ENCODE measurements at regions of chr1 and their contacts with region 1.

Region 1: DNA sequence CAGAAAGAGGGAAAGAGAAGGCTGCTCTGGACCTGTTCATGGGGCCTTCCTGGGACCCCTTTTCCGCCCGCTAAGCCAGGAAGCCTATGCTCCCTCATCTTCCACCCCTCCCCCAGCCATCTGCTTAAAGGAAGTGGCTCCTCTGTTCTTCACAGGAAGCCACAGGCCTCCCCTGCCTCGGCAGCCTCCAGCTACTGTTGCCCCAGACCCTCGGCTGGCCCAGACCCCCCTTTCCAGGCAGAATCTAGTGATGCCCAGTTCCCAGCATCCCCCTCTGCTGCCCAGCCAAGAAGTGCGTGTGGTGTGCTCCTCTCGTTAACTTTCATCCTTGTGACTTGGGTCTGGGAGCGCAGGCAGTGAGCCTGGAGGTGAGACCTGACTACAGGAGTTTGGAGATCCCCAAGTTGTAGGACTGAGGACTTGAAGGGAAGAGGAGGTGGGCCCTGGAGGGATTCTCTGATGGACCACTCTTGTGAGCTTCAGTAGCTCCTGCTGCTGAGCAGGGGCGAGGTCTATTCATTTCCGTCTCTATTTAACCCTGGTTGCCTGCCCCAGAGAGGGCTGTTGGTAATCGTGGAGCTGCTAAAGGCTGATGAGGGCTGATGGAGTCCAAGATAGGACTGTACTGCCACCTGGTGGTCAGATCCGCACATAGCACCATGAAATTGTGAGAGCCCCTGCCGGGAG is 9.1 kb downstream of the IFI6 start:
- DNase-seq: peak; percentile 85 to 89 (median 87)
- H3K4me3 ChIP-seq: peak overlapping the region; percentile 18 to 49
- H3K4me3 Mint-ChIP-seq: peak overlapping the region; percentile 69 to 93 (median 84)
- H3K27ac ChIP-seq: peak overlapping the region; percentile 76
- H3K27ac Mint-ChIP-seq: peak overlapping the region; percentile 95 to 100 (median 98)
- H3K4me1 ChIP-seq: peaks cover 50% of the 10 kb centered on the region
- H3K4me1 Mint-ChIP-seq: peaks cover 41 to 50% (median 46%) of the 10 kb centered on the region in 4 donors
- H3K27me3 ChIP-seq: no peaks in the 10 kb centered on the region
- H3K27me3 Mint-ChIP-seq: no peaks in the 10 kb centered on the region

Region 2: DNA sequence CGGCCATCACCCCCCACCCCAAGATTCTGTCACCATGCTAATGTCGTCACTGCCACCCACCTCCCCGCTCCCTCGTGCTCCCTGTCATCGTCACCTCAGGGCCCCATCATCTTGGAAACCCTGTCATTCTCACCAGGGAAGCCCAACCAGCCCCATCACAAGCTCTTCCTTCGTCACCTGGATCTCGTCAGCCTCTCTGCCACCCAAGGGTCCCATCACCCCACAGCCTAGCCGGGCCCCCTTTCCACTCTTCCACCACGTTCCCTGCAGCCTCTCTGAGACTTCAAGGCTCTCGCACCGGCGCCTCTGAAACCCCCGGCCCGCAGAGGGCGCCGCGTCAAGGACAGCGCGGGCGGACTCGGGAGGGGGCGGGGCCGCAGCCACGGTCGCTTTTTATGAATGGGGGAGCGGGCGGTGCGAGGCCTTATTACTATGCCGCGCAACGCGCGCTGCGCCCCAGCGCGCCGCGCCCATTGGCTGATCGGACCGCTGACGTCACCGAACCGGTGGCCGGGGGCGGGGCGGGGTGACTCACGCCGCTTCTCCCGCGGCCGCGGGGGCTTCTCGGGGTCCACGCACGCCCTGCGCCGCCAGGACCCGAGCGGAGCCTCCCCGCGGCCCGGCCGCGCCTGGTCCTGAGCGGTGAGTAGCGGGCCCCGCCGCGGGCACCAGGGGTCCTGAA is 270.6 kb before region 1 on chr1 and contains the start of gene GPR3:
- CTCF ChIA-PET with region 1: interaction called, 8 read pairs
- POLR2A ChIA-PET with region 1: interaction called, 6 read pairs
- intact Hi-C with region 1: loop called (anchors 1 kb)
- DNase-seq: peak; percentile 88 to 92 (median 89)
- H3K4me3 ChIP-seq: peak within 1 kb of the TSS; percentile 17 to 68
- H3K4me3 Mint-ChIP-seq: peak within 1 kb of the TSS; percentile 79 to 93 (median 84)
- H3K27ac ChIP-seq: peak within 1 kb of the TSS; percentile 42
- H3K27ac Mint-ChIP-seq: peak within 1 kb of the TSS; percentile 58 to 97 (median 94)
- H3K4me1 ChIP-seq: peaks cover 26% of the 10 kb centered on the region
- H3K4me1 Mint-ChIP-seq: peaks cover 11 to 30% (median 17%) of the 10 kb centered on the region in 4 donors
- H3K27me3 ChIP-seq: no peaks in the 10 kb centered on the region
- H3K27me3 Mint-ChIP-seq: peaks cover 1 to 4% of the 10 kb centered on the region in 2 donors
- total RNA-seq, gene GPR3: not detected

Region 3: GRCh38 chr1:27489910-27490741 is 172.7 kb before region 1 on chr1 and contains the start of gene WASF2:
- CTCF ChIA-PET with region 1: no interaction called
- POLR2A ChIA-PET with region 1: interaction called, 7 read pairs
- intact Hi-C with region 1: loop called (anchors 1 kb)
- DNase-seq: peak; percentile 97 to 98 (median 97)
- H3K4me3 ChIP-seq: peak within 1 kb of the TSS; percentile 44 to 100
- H3K4me3 Mint-ChIP-seq: peak within 1 kb of the TSS; percentile 95 to 100 (median 97)
- H3K27ac ChIP-seq: peak within 1 kb of the TSS; percentile 87
- H3K27ac Mint-ChIP-seq: peak within 1 kb of the TSS; percentile 97 to 99 (median 99)
- H3K4me1 ChIP-seq: peaks cover 32% of the 10 kb centered on the region
- H3K4me1 Mint-ChIP-seq: peaks cover 18 to 45% (median 26%) of the 10 kb centered on the region in 4 donors
- H3K27me3 ChIP-seq: no peaks in the 10 kb centered on the region
- H3K27me3 Mint-ChIP-seq: peaks cover 0 to 3% of the 10 kb centered on the region in 2 donors
- total RNA-seq, gene WASF2: 163 to 164 TPM

Region 4: DNA sequence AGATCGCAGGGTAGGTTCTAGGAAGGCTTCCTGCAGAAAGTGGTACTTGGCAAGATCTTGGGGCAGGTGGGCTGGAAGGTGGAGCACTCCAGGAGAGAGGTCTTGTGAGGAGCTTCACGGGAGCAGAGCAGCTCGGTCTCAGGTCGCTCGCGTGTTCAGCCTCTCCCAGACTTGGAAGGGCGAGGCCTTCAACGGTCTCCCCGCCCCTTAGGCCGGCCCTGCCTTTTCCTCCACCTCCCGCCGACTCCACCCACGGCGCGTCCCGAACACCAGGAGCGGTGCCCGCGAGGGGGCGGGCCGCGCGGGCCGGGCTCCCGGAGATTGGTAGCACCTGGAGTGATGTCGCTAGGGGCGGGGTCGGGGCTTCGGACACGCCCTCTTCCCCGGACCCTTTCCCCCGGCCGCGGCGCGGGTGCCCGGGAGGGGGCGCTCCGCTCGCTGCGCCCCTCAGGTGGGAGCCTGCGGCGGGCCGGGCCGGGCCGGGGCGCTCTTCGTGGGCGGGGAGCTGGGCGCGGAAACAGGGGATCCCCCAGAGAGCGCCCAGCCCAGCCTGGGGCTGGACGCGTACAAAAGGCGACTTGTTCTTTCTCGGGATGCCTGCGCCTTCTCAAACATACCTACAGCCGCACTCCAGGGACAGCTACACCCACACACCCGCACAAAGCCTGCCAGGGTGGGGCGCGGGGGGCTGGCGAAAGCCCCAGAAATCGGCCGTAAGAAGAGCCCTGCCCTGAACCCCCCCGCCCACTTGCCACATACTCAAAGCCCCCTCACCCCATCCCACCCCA is 94.4 kb before region 1 on chr1:
- CTCF ChIA-PET with region 1: interaction called, 8 read pairs
- POLR2A ChIA-PET with region 1: interaction called, 9 read pairs
- intact Hi-C with region 1: loop called (anchors 1 kb)
- DNase-seq: peak; percentile 92 to 94 (median 93)
- H3K4me3 ChIP-seq: peak overlapping the region in 1 of 2 donors; percentile 55
- H3K4me3 Mint-ChIP-seq: peak overlapping the region; percentile 66 to 92 (median 84)
- H3K27ac ChIP-seq: peak overlapping the region; percentile 60
- H3K27ac Mint-ChIP-seq: peak overlapping the region; percentile 71 to 92 (median 86)
- H3K4me1 ChIP-seq: peaks cover 27% of the 10 kb centered on the region
- H3K4me1 Mint-ChIP-seq: peaks cover 16 to 39% (median 22%) of the 10 kb centered on the region in 4 donors
- H3K27me3 ChIP-seq: no peaks in the 10 kb centered on the region
- H3K27me3 Mint-ChIP-seq: no peaks in the 10 kb centered on the region

Region 5: DNA sequence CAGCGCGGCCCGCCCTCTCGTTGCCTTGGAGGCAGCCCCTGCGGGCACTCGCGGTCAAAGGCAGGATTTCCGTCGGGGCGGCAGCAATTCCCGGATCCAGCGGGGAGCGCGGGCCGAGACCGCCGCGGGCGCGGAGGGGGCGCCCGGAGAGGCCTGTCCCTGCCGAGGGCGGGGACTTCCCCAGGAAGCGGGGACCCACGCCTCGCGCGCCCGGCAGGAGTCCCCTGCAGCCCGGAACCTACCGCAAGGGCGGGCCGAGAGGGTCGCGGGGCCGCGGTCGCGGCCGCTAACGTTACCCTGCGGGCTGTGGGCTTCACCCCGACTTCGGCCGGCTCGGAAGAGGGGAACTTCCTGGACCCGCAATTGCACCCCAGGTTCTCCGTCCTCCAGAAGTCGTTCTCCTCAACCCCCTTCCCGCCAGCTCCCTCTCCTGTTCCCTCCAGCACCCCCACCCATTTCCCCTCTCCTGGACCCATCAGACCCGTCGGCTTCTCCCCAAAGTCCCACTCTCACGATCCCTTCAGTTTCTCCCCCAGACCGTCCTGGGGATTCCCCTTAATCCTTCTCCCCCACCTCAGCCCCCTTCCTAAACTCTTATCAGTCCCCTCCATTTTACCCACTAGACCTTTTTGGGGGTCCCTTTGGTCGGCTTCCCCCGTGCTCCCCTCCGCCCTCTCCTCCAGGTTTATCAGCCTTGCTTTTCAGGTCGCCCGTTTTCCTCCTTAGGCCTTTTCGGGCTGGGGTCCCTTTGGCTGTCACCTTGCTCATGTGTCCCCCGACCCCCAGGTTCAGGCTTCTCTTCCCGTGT is 28.5 kb before region 1 on chr1:
- CTCF ChIA-PET with region 1: interaction called, 7 read pairs
- POLR2A ChIA-PET with region 1: interaction called, 13 read pairs
- intact Hi-C with region 1: no loop called
- DNase-seq: peak; percentile 41 to 62 (median 46)
- H3K4me3 ChIP-seq: peak overlapping the region; percentile 17 to 38
- H3K4me3 Mint-ChIP-seq: peak overlapping the region; percentile 62 to 80 (median 72)
- H3K27ac ChIP-seq: peak overlapping the region; percentile 62
- H3K27ac Mint-ChIP-seq: peak overlapping the region; percentile 41 to 90 (median 87)
- H3K4me1 ChIP-seq: peaks cover 66% of the 10 kb centered on the region
- H3K4me1 Mint-ChIP-seq: peaks cover 51 to 82% (median 62%) of the 10 kb centered on the region in 4 donors
- H3K27me3 ChIP-seq: no peaks in the 10 kb centered on the region
- H3K27me3 Mint-ChIP-seq: no peaks in the 10 kb centered on the region

Region 6: DNA sequence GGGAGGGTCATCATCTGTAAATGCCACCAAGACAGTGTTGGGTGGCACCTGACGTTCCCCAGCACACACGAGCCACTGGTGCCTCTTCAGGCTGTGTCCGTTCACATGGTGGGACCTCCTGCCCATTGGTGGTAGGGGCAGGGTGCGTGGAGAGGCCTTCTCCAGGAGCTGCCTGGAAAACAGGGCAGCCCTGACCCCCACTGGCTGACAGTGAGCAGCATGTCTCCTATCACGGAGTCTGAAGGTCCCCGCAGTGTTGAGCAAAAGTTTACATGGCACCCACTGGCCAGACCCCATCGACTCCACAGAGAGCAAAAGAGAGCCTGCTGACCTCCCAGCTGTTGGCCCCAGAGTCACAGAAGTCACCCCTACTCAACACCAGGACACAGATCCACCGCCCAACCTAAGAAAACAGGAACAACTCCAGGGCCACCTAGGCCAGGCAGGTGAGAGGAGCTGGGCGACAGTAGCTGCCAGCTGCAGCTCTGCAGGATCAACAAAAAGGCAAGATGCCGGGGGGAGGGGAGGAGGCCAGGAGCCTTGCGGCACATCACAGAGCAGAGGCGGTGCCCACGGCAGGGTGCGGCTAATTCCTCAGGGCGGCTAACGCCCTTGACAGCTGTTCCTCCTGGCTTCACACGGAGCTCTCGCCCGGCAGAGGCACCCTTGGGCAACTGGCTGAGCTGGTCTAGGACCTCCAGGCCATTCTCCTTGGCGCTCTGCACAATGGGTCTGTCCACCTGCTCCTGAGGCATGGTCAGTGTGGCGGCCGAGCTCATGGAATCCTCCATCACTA is 23.6 kb after region 1 on chr1:
- CTCF ChIA-PET with region 1: no interaction called
- POLR2A ChIA-PET with region 1: no interaction called
- intact Hi-C with region 1: no loop called
- DNase-seq: no peak
- H3K4me3 ChIP-seq: no peak overlapping the region
- H3K4me3 Mint-ChIP-seq: no peak overlapping the region
- H3K27ac ChIP-seq: no peak overlapping the region
- H3K27ac Mint-ChIP-seq: no peak overlapping the region
- H3K4me1 ChIP-seq: no peaks in the 10 kb centered on the region
- H3K4me1 Mint-ChIP-seq: peaks cover 0 to 3% (median under 1%) of the 10 kb centered on the region in 4 donors
- H3K27me3 ChIP-seq: no peaks in the 10 kb centered on the region
- H3K27me3 Mint-ChIP-seq: peaks cover 0 to 2% of the 10 kb centered on the region in 2 donors

Region 7: DNA sequence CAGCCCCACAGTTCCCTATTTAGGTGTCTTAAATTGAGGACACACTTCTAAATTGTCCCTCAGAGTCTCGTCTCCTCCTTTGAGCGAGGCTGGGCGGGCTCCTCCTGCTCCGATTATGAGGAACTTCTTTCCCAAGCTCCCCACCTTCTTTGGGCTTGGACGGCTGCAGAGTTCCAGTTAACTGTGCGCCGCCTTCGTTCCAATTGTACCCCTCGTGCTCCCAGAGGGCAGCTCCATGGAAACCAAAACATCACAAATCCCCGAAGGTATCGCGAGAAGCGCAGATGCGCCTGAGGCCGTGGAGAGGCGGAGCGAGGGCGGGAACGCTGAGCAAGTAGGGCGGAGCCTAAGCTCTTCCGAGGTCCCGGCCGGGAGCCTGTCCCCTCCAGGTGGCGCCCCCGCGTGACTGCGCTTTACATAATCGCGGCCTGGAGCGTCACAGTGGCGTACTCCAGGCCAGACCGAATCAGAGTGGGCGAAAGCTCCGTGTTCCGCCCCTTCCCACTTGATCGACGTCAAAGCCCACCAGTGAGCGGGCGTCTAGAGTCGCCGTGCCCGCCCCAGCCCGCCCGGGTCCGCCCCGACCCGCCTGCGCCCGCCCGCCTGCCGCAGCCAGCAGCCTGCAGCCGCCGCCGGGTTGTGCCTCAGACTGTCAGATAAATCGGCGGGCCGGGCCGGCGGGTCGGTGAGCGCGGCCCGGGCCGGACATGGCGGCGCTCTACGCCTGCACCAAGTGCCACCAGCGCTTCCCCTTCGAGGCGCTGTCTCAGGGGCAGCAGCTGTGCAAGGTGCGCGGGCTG is 62.7 kb after region 1 on chr1 and contains the start of gene FAM76A:
- CTCF ChIA-PET with region 1: interaction called, 12 read pairs
- POLR2A ChIA-PET with region 1: interaction called, 28 read pairs
- intact Hi-C with region 1: no loop called
- DNase-seq: peak; percentile 99 to 100 (median 99)
- H3K4me3 ChIP-seq: peak within 1 kb of the TSS; percentile 38 to 91
- H3K4me3 Mint-ChIP-seq: peak within 1 kb of the TSS; percentile 83 to 91 (median 88)
- H3K27ac ChIP-seq: peak within 1 kb of the TSS; percentile 90
- H3K27ac Mint-ChIP-seq: peak within 1 kb of the TSS; percentile 96 to 100 (median 99)
- H3K4me1 ChIP-seq: peaks cover 16% of the 10 kb centered on the region
- H3K4me1 Mint-ChIP-seq: peaks cover 11 to 38% (median 24%) of the 10 kb centered on the region in 4 donors
- H3K27me3 ChIP-seq: no peaks in the 10 kb centered on the region
- H3K27me3 Mint-ChIP-seq: no peaks in the 10 kb centered on the region
- total RNA-seq, gene FAM76A: 22.8 to 26.0 TPM

Region 8: GRCh38 chr1:27736252-27736651 is 73.4 kb after region 1 on chr1:
- CTCF ChIA-PET with region 1: no interaction called
- POLR2A ChIA-PET with region 1: no interaction called
- intact Hi-C with region 1: no loop called
- DNase-seq: no peak
- H3K4me3 ChIP-seq: no peak overlapping the region
- H3K4me3 Mint-ChIP-seq: no peak overlapping the region
- H3K27ac ChIP-seq: no peak overlapping the region
- H3K27ac Mint-ChIP-seq: peak overlapping the region in 1 of 7 donors; percentile 19
- H3K4me1 ChIP-seq: no peaks in the 10 kb centered on the region
- H3K4me1 Mint-ChIP-seq: peaks cover 0 to 10% (median 0%) of the 10 kb centered on the region in 4 donors
- H3K27me3 ChIP-seq: no peaks in the 10 kb centered on the region
- H3K27me3 Mint-ChIP-seq: no peaks in the 10 kb centered on the region

Region 9: GRCh38 chr1:27952147-27952546 is 289.3 kb after region 1 on chr1:
- CTCF ChIA-PET with region 1: no interaction called
- POLR2A ChIA-PET with region 1: no interaction called
- intact Hi-C with region 1: no loop called
- DNase-seq: no peak
- H3K4me3 ChIP-seq: no peak overlapping the region
- H3K4me3 Mint-ChIP-seq: no peak overlapping the region
- H3K27ac ChIP-seq: no peak overlapping the region
- H3K27ac Mint-ChIP-seq: no peak overlapping the region
- H3K4me1 ChIP-seq: no peaks in the 10 kb centered on the region
- H3K4me1 Mint-ChIP-seq: peaks cover under 1 to 6% (median 1%) of the 10 kb centered on the region in 4 donors
- H3K27me3 ChIP-seq: no peaks in the 10 kb centered on the region
- H3K27me3 Mint-ChIP-seq: no peaks in the 10 kb centered on the region